A549 (cell line): ENCODE measurements at regions of chr4 and their contacts with region 1.

Region 1: GRCh38 chr4:1628892-1629698 is 55.0 kb downstream of the FAM53A start:
- DNase-seq: peak; percentile 27 to 54
- ATAC-seq: peak; percentile 78 to 96; a peak in 5 of 6 replicates
- H3K4me3 ChIP-seq: no peak overlapping the region
- H3K27ac ChIP-seq: no peak overlapping the region
- H3K4me1 ChIP-seq: no peaks in the 10 kb centered on the region
- CTCF ChIP-seq: peak; percentile 71
- EP300 ChIP-seq: no peak
- POLR2A ChIP-seq: no peak
- RAD21 ChIP-seq: peak; percentile 76 to 77

Region 2: GRCh38 chr4:1356181-1356998 is 272.7 kb before region 1 on chr4:
- CTCF ChIA-PET with region 1: interaction called, 29 read pairs
- POLR2A ChIA-PET with region 1: no interaction called
- DNase-seq: peak; percentile 61
- ATAC-seq: peak; percentile 51 to 63; a peak in 3 of 6 replicates
- H3K4me3 ChIP-seq: no peak overlapping the region
- H3K27ac ChIP-seq: no peak overlapping the region
- H3K4me1 ChIP-seq: 0 out of 3 replicates have a peak, but pooled peaks cover 3% of the 10 kb centered on the region
- CTCF ChIP-seq: peak; percentile 49
- EP300 ChIP-seq: no peak
- POLR2A ChIP-seq: no peak
- RAD21 ChIP-seq: peak; percentile 59 to 64

Region 3: GRCh38 chr4:1646690-1647089 is 17.6 kb after region 1 on chr4:
- CTCF ChIA-PET with region 1: interaction called, 11 read pairs
- POLR2A ChIA-PET with region 1: no interaction called
- DNase-seq: no peak
- ATAC-seq: no peak
- H3K4me3 ChIP-seq: no peak overlapping the region
- H3K27ac ChIP-seq: no peak overlapping the region
- H3K4me1 ChIP-seq: no peaks in the 10 kb centered on the region
- CTCF ChIP-seq: no peak
- EP300 ChIP-seq: no peak
- POLR2A ChIP-seq: no peak
- RAD21 ChIP-seq: no peak

Region 4: GRCh38 chr4:1658146-1658545 is 29.1 kb after region 1 on chr4:
- CTCF ChIA-PET with region 1: interaction called, 11 read pairs
- POLR2A ChIA-PET with region 1: no interaction called
- DNase-seq: no peak
- ATAC-seq: no peak
- H3K4me3 ChIP-seq: no peak overlapping the region
- H3K27ac ChIP-seq: no peak overlapping the region
- H3K4me1 ChIP-seq: no peaks in the 10 kb centered on the region
- CTCF ChIP-seq: no peak
- EP300 ChIP-seq: no peak
- POLR2A ChIP-seq: no peak
- RAD21 ChIP-seq: no peak

Region 5: DNA sequence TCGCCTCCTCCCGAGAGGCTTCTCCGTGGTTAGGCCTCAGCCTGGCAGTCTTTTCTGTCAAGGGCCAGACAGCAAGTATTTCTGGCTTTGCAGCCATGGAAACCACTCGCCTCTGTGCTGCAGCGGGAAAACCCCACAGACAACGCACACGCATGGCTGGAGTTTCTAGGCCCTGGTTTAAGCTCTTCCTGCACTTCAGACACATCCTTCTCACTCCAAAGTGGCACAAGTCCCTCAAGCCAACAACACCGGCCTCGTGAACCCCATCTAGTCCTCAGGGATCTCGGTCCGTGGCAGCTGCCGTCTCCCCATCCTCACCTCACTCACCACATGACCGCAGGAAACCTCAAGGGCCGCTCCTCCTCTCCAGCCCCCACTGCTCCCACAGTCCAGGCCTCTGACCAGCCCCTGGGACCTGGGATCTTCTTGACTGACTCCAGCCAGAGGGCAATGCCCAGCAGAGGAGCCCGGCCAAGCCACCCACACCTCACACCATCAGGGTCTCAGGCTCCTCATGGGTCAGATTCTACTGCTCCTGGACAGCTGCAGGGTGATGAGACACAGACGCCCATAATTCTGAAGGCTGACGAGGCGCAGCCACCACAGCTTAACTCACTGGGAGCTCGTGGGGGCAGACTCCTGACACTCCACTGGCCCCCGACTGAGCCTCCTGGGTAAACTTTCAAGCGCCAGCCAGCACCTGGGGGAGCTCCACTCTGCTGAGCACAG is 205.1 kb after region 1 on chr4:
- CTCF ChIA-PET with region 1: no interaction called
- POLR2A ChIA-PET with region 1: no interaction called
- DNase-seq: no peak
- ATAC-seq: no peak
- H3K4me3 ChIP-seq: no peak overlapping the region
- H3K27ac ChIP-seq: no peak overlapping the region
- H3K4me1 ChIP-seq: no peaks in the 10 kb centered on the region
- CTCF ChIP-seq: no peak
- EP300 ChIP-seq: no peak
- POLR2A ChIP-seq: no peak
- RAD21 ChIP-seq: no peak